Activated naive CD4-positive, alpha-beta T cell treated with anti-CD3 and anti-CD28 coated beads for 36 hours (primary cell): ENCODE measurements at regions of chr3 and their contacts with region 1.

Region 1: DNA sequence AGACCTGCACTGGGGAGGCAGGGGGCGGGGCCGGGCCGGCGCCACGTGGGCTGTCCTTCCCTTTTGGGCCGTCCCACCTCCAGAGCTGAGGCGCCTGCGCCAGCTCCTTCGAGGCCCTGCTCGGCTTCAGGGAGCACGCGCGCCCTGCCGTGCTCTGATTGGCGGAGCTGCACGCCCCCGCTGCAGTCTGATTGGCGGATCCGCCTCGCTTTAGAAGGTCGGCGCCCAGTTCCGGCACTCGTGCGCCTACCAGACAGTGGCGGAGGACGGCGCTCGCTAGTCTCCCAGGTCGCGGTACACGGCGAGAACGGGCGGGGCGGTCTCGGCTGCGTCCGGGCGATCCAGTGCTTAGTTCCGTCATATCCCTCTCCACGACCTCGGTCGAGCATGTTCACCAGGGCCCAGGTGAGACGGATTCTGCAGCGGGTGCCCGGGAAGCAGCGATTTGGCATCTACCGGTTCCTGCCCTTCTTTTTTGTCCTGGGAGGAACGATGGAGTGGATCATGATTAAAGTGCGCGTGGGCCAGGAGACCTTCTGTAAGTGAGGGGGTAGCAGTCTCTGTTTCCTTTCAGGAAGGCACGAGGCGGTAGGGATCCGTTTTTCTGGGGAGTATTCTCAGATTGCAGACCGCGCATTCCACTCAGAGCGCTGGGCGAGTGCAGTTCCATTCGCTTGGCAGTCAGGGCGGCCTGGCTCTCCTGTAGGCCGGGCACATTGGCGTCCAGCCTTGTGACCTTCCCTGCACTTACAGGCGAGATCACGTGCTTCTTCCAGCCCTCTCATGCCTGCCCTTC is at the start of gene UQCC5:
- DNase-seq: peak; percentile 98
- H3K4me3 Mint-ChIP-seq: peak within 1 kb of the TSS; percentile 91
- H3K27ac Mint-ChIP-seq: peak within 1 kb of the TSS; percentile 87
- H3K4me1 Mint-ChIP-seq: peaks cover 49% of the 10 kb centered on the region
- H3K27me3 Mint-ChIP-seq: no peaks in the 10 kb centered on the region
- total RNA-seq, gene UQCC5: 12.3 to 13.1 TPM

Region 2: DNA sequence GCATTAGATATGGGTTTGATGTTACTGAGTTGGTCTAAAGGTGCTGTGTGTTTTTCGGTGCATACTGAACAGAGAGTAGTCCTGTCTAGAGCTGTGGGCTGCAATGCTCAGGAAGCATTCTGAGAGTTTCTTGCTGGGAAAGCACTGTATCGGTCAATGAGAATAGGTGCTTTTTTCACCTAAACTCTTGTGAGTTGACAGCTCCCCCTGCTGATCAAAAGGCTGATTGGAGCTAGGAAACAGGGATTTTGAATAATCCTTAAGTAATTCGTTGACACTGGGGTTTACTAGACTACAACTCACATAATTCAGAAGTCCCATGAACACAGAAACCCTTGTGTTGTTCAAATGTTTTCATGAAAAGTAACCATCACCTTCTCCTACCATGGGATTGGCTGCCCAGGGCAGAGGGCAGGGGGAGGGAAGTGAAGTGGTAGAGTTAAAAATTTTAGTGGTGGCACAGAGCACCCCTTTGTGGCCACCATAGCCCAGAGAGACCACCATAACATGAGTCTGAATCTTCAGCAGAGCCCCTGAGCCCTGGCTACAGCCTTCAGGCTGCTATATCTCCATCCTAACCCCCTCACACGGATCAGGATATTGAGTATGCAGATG is 1164.5 kb before region 1 on chr3:
- CTCF ChIA-PET with region 1: no interaction called
- intact Hi-C with region 1: no loop called
- DNase-seq: peak; percentile 78
- H3K4me3 Mint-ChIP-seq: no peak overlapping the region
- H3K27ac Mint-ChIP-seq: no peak overlapping the region
- H3K4me1 Mint-ChIP-seq: peaks cover 2% of the 10 kb centered on the region
- H3K27me3 Mint-ChIP-seq: no peaks in the 10 kb centered on the region

Region 3: GRCh38 chr3:51982782-51983577 is 553.6 kb before region 1 on chr3 and contains the start of gene ACY1:
- CTCF ChIA-PET with region 1: no interaction called
- intact Hi-C with region 1: loop called (anchors 5 kb)
- DNase-seq: peak; percentile 89
- H3K4me3 Mint-ChIP-seq: peak within 1 kb of the TSS; percentile 95
- H3K27ac Mint-ChIP-seq: peak within 1 kb of the TSS; percentile 91
- H3K4me1 Mint-ChIP-seq: peaks cover 29% of the 10 kb centered on the region
- H3K27me3 Mint-ChIP-seq: no peaks in the 10 kb centered on the region
- total RNA-seq, gene ACY1: 62.1 to 68.9 TPM

Region 4: GRCh38 chr3:52455283-52456168 is 81.0 kb before region 1 on chr3 and contains the start of gene NISCH:
- CTCF ChIA-PET with region 1: no interaction called
- intact Hi-C with region 1: loop called (anchors 1 kb)
- DNase-seq: peak; percentile 96
- H3K4me3 Mint-ChIP-seq: peak within 1 kb of the TSS; percentile 94
- H3K27ac Mint-ChIP-seq: peak within 1 kb of the TSS; percentile 96
- H3K4me1 Mint-ChIP-seq: peaks cover 35% of the 10 kb centered on the region
- H3K27me3 Mint-ChIP-seq: no peaks in the 10 kb centered on the region
- total RNA-seq, gene NISCH: 50.4 to 52.5 TPM

Region 5: GRCh38 chr3:52705688-52706686 is 169.4 kb after region 1 on chr3 and contains the starts of genes GLT8D1 and SPCS1:
- CTCF ChIA-PET with region 1: no interaction called
- intact Hi-C with region 1: loop called (anchors 1 kb)
- DNase-seq: peak; percentile 84
- H3K4me3 Mint-ChIP-seq: peak within 1 kb of the TSS; percentile 94
- H3K27ac Mint-ChIP-seq: peak within 1 kb of the TSS; percentile 88
- H3K4me1 Mint-ChIP-seq: peaks cover 31% of the 10 kb centered on the region
- H3K27me3 Mint-ChIP-seq: no peaks in the 10 kb centered on the region
- total RNA-seq, gene GLT8D1: 24.5 to 25.4 TPM
- total RNA-seq, gene SPCS1: 118 to 123 TPM

Region 6: DNA sequence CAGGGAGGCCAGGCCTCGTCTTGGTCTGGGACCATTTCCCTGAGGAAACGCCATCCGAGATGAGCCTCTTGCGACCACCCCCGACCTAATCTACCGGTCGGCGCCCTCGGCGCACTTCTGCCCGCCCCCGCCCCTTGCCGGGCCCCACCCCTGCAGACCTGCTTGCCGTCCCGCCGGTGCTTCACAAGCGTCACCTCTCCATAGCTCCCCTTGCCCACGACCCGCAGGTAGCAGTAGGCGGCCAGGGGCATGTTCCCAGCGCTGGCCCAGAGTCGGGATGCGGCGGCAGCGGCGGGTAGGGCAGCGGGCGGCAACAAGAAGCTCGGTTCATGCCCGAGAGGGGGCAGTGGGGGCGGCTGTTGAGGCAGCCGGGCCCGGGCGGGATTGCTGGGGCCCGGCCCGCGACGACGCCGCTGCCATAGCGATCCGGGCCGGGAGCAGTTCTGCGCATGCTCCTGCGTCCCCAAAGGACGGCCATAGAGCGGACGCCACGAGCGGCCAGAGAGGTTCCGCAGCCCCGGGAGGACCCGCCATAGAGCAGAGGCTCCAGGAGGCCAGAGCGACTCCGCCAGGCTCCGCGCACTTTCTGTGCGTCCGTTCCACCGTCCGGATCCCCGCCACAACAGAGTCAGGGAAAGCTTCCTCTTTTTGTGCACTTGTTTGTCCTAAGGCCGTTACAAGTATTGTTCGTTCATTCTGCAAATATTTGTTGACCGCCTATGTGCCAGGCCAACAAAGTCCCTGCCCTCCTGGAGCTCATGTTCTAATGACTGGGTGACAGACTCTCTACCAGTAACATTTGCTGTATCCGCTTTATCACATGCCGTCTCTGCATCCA is 234.1 kb after region 1 on chr3 and contains the start of gene NEK4:
- CTCF ChIA-PET with region 1: no interaction called
- intact Hi-C with region 1: loop called (anchors 2 kb)
- DNase-seq: peak; percentile 91
- H3K4me3 Mint-ChIP-seq: peak within 1 kb of the TSS; percentile 96
- H3K27ac Mint-ChIP-seq: peak within 1 kb of the TSS; percentile 93
- H3K4me1 Mint-ChIP-seq: peaks cover 20% of the 10 kb centered on the region
- H3K27me3 Mint-ChIP-seq: no peaks in the 10 kb centered on the region
- total RNA-seq, gene NEK4: 12.8 to 15.3 TPM

Region 7: GRCh38 chr3:53045518-53046170 is 509.1 kb after region 1 on chr3 and contains the start of gene SFMBT1:
- CTCF ChIA-PET with region 1: no interaction called
- intact Hi-C with region 1: loop called (anchors 10 kb)
- DNase-seq: peak; percentile 68
- H3K4me3 Mint-ChIP-seq: peak within 1 kb of the TSS; percentile 90
- H3K27ac Mint-ChIP-seq: peak within 1 kb of the TSS; percentile 90
- H3K4me1 Mint-ChIP-seq: peaks cover 42% of the 10 kb centered on the region
- H3K27me3 Mint-ChIP-seq: no peaks in the 10 kb centered on the region
- total RNA-seq, gene SFMBT1: 15.1 to 15.4 TPM